Activated CD8-positive, alpha-beta memory T cell treated with anti-CD3 and anti-CD28 coated beads, Interleukin-2, amount 10 ng/mL, durations not matched to agents 7 days and 5 days (primary cell): ENCODE measurements at regions of chr19 and their contacts with region 1.

Region 1: DNA sequence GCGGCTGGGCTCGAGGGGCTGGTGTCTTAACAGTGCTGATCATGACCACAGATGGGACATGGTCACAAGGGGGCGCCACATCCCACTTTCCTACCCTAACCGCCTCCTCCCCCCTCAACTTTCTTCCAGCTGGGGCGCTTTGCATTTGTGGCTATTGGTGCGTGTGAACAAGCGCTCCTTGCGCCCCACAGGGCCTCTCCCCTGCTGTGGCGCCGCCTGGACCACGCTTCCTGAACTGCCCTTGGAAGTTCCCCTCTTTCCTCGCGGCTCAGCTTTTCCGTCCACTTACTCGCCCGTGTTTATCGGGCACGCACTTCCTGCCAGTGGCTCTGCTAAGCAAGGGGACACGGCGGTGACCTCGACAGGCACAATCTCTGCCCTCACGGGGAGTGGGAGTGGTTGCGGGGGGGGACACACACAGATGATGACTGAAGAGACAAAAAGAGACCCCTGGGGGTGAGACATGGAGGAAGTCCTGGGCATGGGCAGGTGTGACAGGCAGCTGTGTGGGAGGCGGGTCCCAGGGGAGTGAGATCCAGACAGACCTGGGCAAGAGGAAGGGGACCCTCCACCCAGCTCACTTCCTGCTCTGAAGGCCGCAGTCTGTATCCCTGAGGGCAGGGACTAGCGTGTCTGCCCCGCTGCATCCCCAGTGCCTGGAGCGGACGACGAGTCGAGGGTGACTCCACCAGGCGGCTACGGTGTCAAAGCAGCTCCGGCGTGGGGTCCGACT is 40.3 kb downstream of the ZNF787 start:
- DNase-seq: peak; percentile 77
- ATAC-seq: peak; percentile 70
- H3K4me3 Mint-ChIP-seq: peak overlapping the region; percentile 64
- H3K27ac Mint-ChIP-seq: peak overlapping the region; percentile 25
- H3K4me1 Mint-ChIP-seq: peaks cover 9% of the 10 kb centered on the region
- H3K27me3 Mint-ChIP-seq: peaks cover 8% of the 10 kb centered on the region

Region 2: DNA sequence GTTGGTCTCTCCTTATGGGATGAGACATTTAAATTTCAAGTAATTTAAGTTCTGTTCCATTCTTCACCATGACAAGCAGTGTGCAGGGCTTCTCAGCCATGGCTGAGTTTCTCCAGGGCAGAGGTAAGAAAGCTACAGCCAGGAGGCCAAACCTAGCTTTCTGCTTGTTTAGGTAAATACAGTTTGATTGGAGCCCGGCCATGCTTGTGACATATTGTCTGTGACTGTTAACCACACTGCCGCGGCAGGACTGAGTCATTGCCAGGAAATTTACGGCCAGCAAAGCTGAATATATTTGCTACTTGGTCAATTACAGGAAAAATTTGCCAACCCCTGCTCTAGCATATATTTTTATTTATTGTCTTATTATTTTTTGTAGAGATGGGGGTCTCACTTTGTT is 122.5 kb before region 1 on chr19:
- CTCF ChIA-PET with region 1: no interaction called
- DNase-seq: no peak
- ATAC-seq: no peak
- H3K4me3 Mint-ChIP-seq: no peak overlapping the region
- H3K27ac Mint-ChIP-seq: no peak overlapping the region
- H3K4me1 Mint-ChIP-seq: no peaks in the 10 kb centered on the region
- H3K27me3 Mint-ChIP-seq: no peaks in the 10 kb centered on the region

Region 3: DNA sequence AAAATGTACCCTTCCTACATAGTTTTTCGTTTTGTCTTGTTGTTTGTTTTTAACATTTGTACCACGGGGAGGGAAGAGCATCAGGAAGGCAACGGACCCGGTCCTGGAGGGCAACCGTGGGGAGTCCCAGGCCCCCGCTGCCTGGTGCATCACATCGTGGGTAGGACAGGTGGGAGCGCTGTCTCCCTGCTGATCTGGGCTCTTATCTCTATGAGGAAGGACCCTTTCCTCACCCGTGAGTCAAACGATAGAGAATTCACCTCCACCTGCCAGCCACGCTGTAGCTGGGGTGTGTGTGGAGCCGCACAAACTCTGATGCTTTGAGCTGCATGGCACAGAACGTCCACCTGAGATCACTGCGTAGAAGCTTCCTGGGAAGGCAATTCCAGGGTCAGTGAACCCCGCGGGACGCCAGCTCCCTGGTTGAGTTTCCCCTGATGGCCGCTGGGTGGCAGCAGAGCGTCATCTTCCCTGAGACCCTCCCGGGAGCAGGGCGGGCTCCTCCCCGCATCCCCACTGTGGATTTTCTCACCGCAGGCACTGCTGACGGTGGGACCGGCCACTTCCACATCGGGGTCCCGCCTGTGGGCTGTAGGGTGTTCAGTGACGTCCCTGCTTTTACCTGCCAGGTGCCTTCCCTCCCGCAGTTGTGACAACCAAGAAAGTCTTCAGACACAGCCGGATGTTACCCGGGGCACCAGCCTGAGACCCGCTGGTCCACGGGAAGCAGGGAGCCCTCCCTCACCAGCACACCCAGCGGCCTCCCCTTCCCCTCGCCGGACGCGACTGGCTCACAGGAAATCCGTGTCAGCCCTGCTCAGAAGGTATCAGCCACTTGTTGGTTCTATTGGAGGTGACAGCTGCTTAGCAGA is 14.4 kb before region 1 on chr19:
- CTCF ChIA-PET with region 1: interaction called, 18 read pairs
- DNase-seq: peak; percentile 70
- ATAC-seq: peak; percentile 81
- H3K4me3 Mint-ChIP-seq: peak overlapping the region; percentile 41
- H3K27ac Mint-ChIP-seq: no peak overlapping the region
- H3K4me1 Mint-ChIP-seq: peaks cover 16% of the 10 kb centered on the region
- H3K27me3 Mint-ChIP-seq: peaks cover 16% of the 10 kb centered on the region

Region 4: GRCh38 chr19:56111601-56112312 is 30.9 kb after region 1 on chr19:
- CTCF ChIA-PET with region 1: no interaction called
- DNase-seq: no peak
- ATAC-seq: peak; percentile 57
- H3K4me3 Mint-ChIP-seq: no peak overlapping the region
- H3K27ac Mint-ChIP-seq: peak overlapping the region; percentile 15
- H3K4me1 Mint-ChIP-seq: peaks cover 37% of the 10 kb centered on the region
- H3K27me3 Mint-ChIP-seq: no peaks in the 10 kb centered on the region

Region 5: DNA sequence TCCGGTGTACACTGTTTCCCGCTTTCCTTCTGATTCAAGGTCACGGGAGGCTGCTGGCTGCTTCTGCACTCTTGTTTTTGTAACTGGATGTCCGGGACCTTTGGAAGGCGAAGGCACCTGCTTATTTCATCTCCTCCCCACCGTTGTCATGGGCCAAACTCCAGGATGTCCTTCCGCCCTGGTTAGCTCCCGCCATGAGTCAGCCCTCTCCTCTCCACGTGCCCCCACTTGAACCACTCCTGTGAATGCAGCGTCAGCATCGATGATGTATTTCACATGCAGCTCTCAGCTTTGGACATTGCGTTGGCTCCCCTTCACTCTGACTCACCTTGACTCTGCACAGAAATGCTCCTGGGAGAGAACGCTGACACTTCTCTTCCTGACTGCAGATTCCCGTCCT is 89.4 kb after region 1 on chr19:
- CTCF ChIA-PET with region 1: interaction called, 20 read pairs
- DNase-seq: no peak
- ATAC-seq: no peak
- H3K4me3 Mint-ChIP-seq: no peak overlapping the region
- H3K27ac Mint-ChIP-seq: no peak overlapping the region
- H3K4me1 Mint-ChIP-seq: peaks cover 4% of the 10 kb centered on the region
- H3K27me3 Mint-ChIP-seq: peaks cover 2% of the 10 kb centered on the region